ENCODE measurements at regions of chr21 and their contacts with region 1.

Region 1: GRCh38 chr21:31198575-31198974 is 145.5 kb downstream of the TIAM1 start:
- DNase-seq: no peak
- H3K4me3 Mint-ChIP-seq: no peak overlapping the region
- H3K27ac Mint-ChIP-seq: no peak overlapping the region
- H3K4me1 Mint-ChIP-seq: peaks cover 39% of the 10 kb centered on the region
- H3K27me3 Mint-ChIP-seq: no peaks in the 10 kb centered on the region

Region 2: GRCh38 chr21:31098576-31099005 is 100.0 kb before region 1 on chr21:
- intact Hi-C with region 1: loop called (anchors 5 kb)
- DNase-seq: peak; percentile 91
- H3K4me3 Mint-ChIP-seq: no peak overlapping the region
- H3K27ac Mint-ChIP-seq: no peak overlapping the region
- H3K4me1 Mint-ChIP-seq: peaks cover 24% of the 10 kb centered on the region
- H3K27me3 Mint-ChIP-seq: peaks cover 14% of the 10 kb centered on the region

Region 3: DNA sequence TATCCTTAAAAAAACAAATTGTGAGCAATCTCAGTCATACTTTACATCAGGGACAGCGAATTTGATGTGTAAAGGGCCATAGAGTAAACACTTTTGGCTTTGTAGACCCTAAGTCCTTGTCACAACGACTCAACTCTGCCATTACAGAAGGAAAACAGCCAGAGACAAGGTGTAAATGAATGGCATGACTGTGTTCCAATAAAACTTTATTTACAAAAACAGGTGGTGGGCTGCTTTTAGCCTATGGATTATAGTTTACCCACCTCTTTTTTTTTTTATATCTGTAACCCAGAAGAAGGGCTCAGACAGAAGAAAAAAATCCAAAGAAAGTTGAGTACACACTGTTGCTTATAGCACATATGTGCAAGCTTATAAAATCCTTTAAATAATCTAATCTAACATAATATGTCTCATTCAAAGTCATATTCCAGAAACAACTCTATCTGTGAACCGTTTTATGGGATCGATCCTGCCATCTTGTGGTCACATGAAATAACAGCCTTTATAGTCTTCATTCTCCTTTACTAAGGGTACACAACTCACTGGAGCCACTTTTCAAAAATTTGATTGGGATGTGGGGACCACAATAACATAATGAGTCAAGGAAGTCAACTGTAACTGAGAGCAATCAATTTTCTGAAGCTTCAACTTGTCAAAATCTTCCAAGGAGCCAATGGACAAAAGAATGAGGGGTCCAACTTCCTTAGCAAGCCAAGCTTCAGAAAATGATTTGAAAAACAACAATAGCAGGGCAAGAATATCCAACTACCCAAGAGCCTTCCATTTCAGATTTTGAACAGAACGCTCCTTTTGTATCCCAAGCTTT is 18.1 kb before region 1 on chr21:
- intact Hi-C with region 1: loop called (anchors 1 kb)
- DNase-seq: peak; percentile 77
- H3K4me3 Mint-ChIP-seq: peak overlapping the region; percentile 91
- H3K27ac Mint-ChIP-seq: peak overlapping the region; percentile 96
- H3K4me1 Mint-ChIP-seq: peaks cover 58% of the 10 kb centered on the region
- H3K27me3 Mint-ChIP-seq: no peaks in the 10 kb centered on the region

Region 4: GRCh38 chr21:31326522-31327242 is 128.1 kb after region 1 on chr21:
- intact Hi-C with region 1: loop called (anchors 1 kb)
- DNase-seq: peak; percentile 80
- H3K4me3 Mint-ChIP-seq: peak overlapping the region; percentile 74
- H3K27ac Mint-ChIP-seq: peak overlapping the region; percentile 92
- H3K4me1 Mint-ChIP-seq: peaks cover 28% of the 10 kb centered on the region
- H3K27me3 Mint-ChIP-seq: no peaks in the 10 kb centered on the region

Region 5: GRCh38 chr21:31354604-31355443 is 156.2 kb after region 1 on chr21:
- intact Hi-C with region 1: loop called (anchors 1 kb)
- DNase-seq: peak; percentile 95
- H3K4me3 Mint-ChIP-seq: peak overlapping the region; percentile 44
- H3K27ac Mint-ChIP-seq: peak overlapping the region; percentile 87
- H3K4me1 Mint-ChIP-seq: peaks cover 40% of the 10 kb centered on the region
- H3K27me3 Mint-ChIP-seq: peaks cover 5% of the 10 kb centered on the region

Region 6: DNA sequence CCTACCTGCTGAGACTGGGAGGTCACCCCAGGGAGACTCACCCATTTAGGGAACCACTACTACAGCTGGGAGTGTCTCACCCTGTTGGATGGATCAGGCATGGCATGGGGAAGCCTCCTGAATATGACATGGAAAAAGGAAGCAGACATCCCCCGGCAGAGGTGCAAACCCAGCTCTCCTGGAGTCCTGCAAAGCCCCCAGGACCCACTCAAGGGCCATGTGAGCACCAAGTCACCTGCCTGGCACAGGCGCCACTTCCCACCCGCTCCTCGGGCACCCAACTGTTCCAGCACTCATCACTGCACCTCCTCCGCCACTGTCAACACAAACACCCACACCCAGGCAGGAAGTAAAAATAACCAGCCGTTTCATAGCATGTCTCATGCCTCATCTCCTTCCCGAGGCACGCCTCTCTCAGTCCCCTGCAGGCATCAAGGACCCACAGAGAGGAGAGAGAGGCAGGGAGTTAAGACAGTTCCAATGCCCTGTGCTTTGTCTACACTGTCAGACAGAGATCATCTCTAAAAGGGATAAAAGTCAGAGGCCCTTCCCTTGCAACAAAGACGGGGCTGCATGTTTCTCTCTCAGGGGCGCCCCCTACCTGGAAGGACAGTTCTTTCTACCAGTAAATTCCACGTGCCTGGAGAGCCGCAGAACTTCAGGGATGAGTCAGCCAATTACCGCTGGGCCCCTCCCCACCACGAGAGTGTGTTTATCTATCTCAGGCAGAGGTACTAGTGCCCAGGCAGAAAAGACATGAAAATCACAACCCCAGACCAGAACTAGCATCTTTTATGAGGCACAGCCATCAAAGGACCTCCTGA is 310.8 kb after region 1 on chr21:
- intact Hi-C with region 1: loop called (anchors 2 kb)
- DNase-seq: peak; percentile 95
- H3K4me3 Mint-ChIP-seq: peak overlapping the region; percentile 63
- H3K27ac Mint-ChIP-seq: peak overlapping the region; percentile 38
- H3K4me1 Mint-ChIP-seq: peaks cover 33% of the 10 kb centered on the region
- H3K27me3 Mint-ChIP-seq: peaks cover 21% of the 10 kb centered on the region

Region 7: DNA sequence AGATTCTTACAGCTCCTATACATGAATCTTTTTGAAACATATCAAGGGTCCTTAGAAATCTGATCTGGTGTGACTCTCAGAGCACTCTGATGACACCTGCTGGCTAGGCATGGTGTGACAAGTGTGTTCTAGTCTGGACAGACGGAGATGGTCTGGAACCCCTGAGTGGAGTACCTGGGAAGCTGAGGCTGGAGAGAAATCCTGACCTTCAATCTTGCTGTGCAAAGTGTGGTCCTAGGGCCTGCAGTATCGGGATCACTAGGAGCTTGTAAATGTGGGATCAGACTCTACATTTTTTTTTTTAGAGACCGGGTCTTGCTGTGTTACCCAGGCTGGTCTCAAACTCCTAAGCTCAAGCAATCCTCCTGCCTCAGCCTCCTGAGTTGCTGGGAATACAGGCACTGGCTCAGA is 382.3 kb after region 1 on chr21:
- intact Hi-C with region 1: loop called (anchors 1 kb)
- DNase-seq: peak; percentile 93
- H3K4me3 Mint-ChIP-seq: no peak overlapping the region
- H3K27ac Mint-ChIP-seq: no peak overlapping the region
- H3K4me1 Mint-ChIP-seq: peaks cover 5% of the 10 kb centered on the region
- H3K27me3 Mint-ChIP-seq: peaks cover 26% of the 10 kb centered on the region